CD4-positive, alpha-beta memory T cell (primary cell): ENCODE measurements at regions of chr2 and their contacts with region 1.

Region 1: GRCh38 chr2:176554101-176555048 is 285.1 kb downstream of the MTX2 start:
- DNase-seq: peak in 4 of 5 donors; percentile 42 to 48 (median 45)
- H3K4me3 ChIP-seq: peak overlapping the region; percentile 21 to 33
- H3K4me3 Mint-ChIP-seq: peak overlapping the region; percentile 82 to 94 (median 88)
- H3K27ac ChIP-seq: no peak overlapping the region
- H3K27ac Mint-ChIP-seq: no peak overlapping the region
- H3K4me1 ChIP-seq: peaks cover 10% of the 10 kb centered on the region
- H3K4me1 Mint-ChIP-seq: peaks cover 6 to 13% (median 10%) of the 10 kb centered on the region in 4 donors
- H3K27me3 ChIP-seq: peaks cover 3% of the 10 kb centered on the region
- H3K27me3 Mint-ChIP-seq: peaks cover 20 to 28% of the 10 kb centered on the region in 2 donors

Region 2: GRCh38 chr2:176565641-176566323 is 11.4 kb after region 1 on chr2:
- CTCF ChIA-PET with region 1: interaction called, 29 read pairs
- POLR2A ChIA-PET with region 1: no interaction called
- intact Hi-C with region 1: no loop called
- DNase-seq: no peak
- H3K4me3 ChIP-seq: no peak overlapping the region
- H3K4me3 Mint-ChIP-seq: no peak overlapping the region
- H3K27ac ChIP-seq: no peak overlapping the region
- H3K27ac Mint-ChIP-seq: no peak overlapping the region
- H3K4me1 ChIP-seq: no peaks in the 10 kb centered on the region
- H3K4me1 Mint-ChIP-seq: peaks cover 0 to 3% (median 0%) of the 10 kb centered on the region in 4 donors
- H3K27me3 ChIP-seq: no peaks in the 10 kb centered on the region
- H3K27me3 Mint-ChIP-seq: peaks cover 15 to 29% of the 10 kb centered on the region in 2 donors

Region 3: DNA sequence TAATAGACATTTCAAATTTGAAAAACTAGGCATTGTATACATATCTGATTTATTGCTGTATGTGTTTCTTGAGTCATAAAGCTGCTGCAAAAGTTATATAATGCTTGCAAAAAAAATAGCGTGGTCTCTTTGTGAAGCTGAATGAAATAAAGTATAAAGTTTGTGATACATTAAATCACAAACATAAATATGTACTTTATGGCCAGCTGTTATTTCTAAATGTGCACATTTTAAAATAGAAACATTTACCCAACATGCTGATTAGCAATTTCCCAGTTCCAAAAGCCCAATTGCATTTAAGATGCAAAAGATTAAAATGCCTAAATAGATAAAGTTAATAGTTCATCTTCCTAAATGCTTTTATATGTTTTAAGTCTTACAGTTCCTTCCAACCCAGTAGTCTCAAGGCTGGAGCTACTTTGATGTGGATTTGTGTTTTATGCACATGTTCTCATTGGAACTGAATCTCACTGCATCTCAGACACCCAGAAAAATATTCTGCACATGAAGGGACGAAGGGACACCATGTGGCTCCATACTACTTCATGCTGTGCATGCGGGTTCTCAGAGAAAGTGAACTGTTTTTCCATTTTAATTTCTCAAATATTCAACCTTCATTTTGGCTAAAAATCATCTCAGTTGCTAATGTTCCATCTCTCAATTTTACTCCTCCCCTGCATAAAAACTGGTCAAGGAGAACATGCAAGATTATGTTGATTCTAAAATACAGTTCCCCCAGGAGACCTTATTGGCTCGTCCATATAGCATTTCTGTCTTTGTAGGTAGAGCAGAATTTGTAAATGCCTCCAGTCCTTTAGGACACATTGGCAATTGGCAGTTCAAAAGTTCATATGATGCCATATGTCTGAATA is 19.5 kb after region 1 on chr2:
- CTCF ChIA-PET with region 1: interaction called, 29 read pairs
- POLR2A ChIA-PET with region 1: no interaction called
- intact Hi-C with region 1: no loop called
- DNase-seq: no peak
- H3K4me3 ChIP-seq: no peak overlapping the region
- H3K4me3 Mint-ChIP-seq: no peak overlapping the region
- H3K27ac ChIP-seq: no peak overlapping the region
- H3K27ac Mint-ChIP-seq: no peak overlapping the region
- H3K4me1 ChIP-seq: no peaks in the 10 kb centered on the region
- H3K4me1 Mint-ChIP-seq: no peaks in the 10 kb centered on the region
- H3K27me3 ChIP-seq: no peaks in the 10 kb centered on the region
- H3K27me3 Mint-ChIP-seq: peaks cover 12 to 26% of the 10 kb centered on the region in 2 donors

Region 4: GRCh38 chr2:176845694-176846093 is 291.3 kb after region 1 on chr2:
- CTCF ChIA-PET with region 1: no interaction called
- POLR2A ChIA-PET with region 1: no interaction called
- intact Hi-C with region 1: no loop called
- DNase-seq: no peak
- H3K4me3 ChIP-seq: no peak overlapping the region
- H3K4me3 Mint-ChIP-seq: peak overlapping the region in 1 of 8 donors; percentile 25
- H3K27ac ChIP-seq: no peak overlapping the region
- H3K27ac Mint-ChIP-seq: no peak overlapping the region
- H3K4me1 ChIP-seq: peaks cover 4% of the 10 kb centered on the region
- H3K4me1 Mint-ChIP-seq: peaks cover 0 to 10% (median 2%) of the 10 kb centered on the region in 4 donors
- H3K27me3 ChIP-seq: no peaks in the 10 kb centered on the region
- H3K27me3 Mint-ChIP-seq: peaks cover 4 to 5% of the 10 kb centered on the region in 2 donors